Cardiac septum (tissue), 1 donor: ENCODE measurements at regions of chr2 and their contacts with region 1.

Region 1: GRCh38 chr2:72862239-72862988 is 24.8 kb upstream of the SPR start:
- DNase-seq: peak; percentile 94

Region 2: DNA sequence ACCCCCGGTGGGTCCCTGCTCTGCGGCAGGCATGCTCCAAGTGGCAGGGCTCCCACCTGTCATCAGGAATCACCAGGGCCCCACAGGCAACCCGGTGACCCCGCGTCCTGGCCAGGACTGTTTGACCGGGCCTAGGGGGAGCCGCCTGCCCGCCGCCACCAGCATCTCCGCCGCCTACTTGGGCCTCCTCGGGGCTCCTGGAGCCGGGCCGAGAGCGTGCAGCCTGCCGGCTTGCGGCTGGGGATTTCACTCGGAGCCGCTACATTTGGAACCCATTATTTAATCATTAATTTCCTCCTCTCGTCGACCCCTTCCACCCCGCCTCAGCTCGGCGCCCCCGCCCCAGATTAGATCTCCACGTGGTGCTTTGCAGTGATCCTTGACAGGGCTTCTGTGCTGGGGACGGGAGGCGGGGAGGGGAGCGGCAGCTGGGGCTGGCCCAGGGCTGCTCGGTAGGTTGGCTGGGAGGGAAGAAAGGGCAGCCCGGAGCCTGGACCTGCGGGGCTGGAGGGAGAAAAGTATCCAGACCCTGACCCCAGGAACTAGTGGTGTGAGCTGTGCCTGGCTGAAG is 1010.2 kb before region 1 on chr2:
- intact Hi-C with region 1: no loop called
- DNase-seq: no peak

Region 3: GRCh38 chr2:72649810-72650209 is 212.6 kb before region 1 on chr2:
- intact Hi-C with region 1: no loop called
- DNase-seq: no peak

Region 4: GRCh38 chr2:72770879-72771461 is 91.4 kb before region 1 on chr2:
- intact Hi-C with region 1: loop called (anchors 1 kb)
- DNase-seq: no peak